ENCODE measurements at regions of chr17 and their contacts with region 1.

Region 1: DNA sequence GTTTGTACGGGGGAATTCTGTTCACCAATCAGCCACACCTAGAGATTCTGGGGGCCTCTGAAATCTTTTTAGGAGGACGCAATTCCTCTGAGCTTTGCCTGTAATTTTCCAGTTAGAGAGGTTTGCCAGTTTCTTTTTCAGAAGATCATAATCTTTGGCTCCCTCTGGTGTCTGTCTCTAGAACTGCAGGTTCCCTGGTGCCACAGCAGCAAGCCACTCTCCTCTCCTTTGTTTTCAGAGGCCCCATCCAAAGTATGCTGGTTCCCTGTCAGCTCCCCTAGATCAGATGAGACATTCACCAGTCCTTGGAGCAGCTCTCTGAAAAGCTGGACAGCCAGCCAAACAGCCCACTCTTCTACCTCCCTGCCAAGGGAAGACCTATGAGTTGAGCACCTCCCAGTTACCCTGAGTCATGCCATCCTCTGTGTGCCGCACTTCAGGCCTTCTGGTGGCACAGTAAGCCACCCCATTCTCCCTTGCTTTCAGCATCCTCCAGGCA is 36.1 kb downstream of the RNF112 start:
- DNase-seq: no peak
- ATAC-seq: peak; percentile 82

Region 2: GRCh38 chr17:19248928-19249574 is 198.1 kb before region 1 on chr17:
- intact Hi-C with region 1: no loop called
- DNase-seq: peak; percentile 69
- ATAC-seq: peak; percentile 38

Region 3: GRCh38 chr17:19284005-19284959 is 162.9 kb before region 1 on chr17:
- intact Hi-C with region 1: no loop called
- DNase-seq: no peak
- ATAC-seq: no peak

Region 4: DNA sequence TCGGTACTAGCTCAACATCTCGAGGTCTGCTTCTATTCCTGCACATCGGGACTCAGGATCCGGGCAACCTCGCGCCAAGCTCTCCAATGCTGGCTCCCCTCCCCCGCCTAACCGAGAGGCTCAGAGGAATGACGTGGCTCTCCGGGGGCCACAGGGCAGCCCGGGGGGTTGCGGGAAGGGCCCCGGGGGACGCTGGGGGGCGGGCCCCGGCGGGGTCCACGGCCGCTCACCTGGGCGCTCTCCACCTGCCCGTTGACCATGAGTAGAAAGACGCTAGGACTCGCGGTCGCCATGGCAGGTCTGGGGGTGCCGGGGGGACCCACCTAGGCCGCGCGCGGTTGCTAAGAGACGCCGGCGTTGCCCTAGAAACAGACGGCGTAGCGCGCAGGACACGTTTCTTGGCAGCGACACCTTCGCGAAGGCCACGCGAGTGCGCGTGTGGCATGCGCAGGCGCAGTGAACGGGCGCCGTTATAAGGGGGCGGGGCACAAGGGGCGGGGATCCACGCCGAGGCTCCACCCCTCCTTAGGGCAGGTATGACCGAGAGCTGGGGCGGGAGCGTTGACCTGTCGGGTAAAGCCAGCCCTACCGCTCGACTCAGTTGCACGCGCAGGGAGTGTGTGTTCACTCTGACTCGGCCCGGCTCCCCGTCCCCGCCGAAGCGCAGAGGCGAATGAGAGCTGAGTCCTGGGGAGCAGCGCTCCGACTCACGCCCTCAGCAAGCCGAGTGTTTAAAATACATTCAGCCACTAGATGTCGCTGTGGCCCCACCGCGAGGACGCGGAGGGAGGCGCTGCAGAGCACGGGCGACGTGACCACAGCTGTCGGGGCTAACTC is 84.6 kb before region 1 on chr17 and contains the start of gene B9D1:
- intact Hi-C with region 1: loop called (anchors 2 kb)
- DNase-seq: peak; percentile 96
- ATAC-seq: peak; percentile 97
- total RNA-seq, gene B9D1: 5.9 TPM

Region 5: DNA sequence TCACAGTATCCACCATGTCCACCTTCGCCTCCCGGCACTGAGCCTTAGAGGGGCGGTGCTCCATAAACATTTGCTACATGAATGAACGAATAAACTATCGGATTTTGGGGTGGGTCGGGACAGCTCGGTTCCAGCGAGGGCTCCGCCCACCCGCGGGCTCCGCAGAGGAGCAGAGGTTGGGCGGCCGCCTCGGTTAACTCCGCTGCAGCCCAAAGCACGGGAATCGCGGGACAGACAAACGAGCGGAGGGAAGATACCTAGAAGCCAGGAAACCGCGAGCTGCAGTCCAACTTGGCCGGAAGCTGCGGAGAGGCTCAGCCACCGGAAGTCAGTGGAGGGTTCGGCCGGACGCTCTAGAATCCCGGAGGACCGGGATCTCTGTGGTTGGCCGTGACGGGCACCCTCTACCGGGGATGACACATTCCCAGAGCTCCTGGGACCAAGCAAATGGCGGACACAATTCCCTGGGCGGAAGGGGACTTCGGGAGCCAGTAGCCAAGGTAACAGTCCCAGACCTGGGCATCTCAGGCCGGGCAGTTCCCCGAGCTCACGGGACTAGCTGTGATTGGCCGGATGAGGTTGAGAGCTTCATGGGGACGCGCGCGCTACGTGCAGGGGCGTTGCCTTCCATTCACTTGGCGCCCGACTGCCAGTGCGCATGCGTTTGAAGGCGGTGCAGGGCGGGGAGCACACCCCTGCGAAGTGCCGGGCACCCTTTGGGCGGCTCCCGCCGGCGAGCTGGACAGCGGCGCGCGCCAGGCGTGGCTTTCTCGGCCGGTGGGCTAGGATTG is 69.3 kb before region 1 on chr17:
- intact Hi-C with region 1: no loop called
- DNase-seq: peak; percentile 99
- ATAC-seq: peak; percentile 93

Region 6: DNA sequence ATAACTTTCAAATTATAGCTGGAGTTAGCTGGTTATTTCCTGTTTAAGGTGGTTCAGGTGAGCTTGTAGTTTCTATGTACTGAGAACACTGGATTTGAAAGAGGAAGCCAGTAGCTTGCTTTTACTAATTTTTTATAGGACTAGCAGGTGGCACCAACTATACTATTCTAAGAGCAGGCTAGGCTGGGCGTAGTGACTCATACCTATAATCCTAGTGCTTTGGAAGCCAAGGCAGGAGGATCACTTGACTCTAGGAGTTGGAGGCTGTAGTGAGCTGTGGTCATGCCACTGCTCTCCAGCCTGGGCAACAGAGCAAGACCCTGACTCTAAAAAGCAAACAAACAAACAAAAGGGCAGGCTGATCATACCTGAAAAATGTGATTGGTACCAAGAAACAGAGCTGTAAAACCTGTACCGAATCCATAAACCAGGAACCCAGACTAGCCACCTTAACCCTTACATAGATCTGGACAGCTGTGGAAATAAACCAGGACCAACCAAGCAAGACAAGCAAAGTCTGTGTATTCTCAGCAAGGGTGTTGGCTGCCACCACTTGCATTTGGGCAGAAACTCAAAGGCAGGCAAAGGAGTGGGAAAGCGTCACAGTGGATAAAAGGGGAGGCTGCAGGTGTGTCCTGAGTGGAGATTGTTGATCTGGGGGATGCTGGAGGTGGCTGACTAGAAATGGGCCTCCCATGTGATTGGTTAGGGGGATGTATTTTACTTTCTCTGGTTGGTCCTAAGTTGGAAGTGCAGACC is 122.8 kb after region 1 on chr17:
- intact Hi-C with region 1: no loop called
- DNase-seq: no peak
- ATAC-seq: no peak

Measured in left ventricle myocardium superior (tissue), 1 donor.